Posterior vena cava (tissue), 2 donors: ENCODE measurements at regions of chr6 and their contacts with region 1.

Region 1: GRCh38 chr6:85642774-85643536 is at the start of gene SYNCRIP:
- DNase-seq: peak; percentile 100
- total RNA-seq, gene SYNCRIP: 113 to 147 TPM

Region 2: GRCh38 chr6:85678602-85679444 is 35.9 kb after region 1 on chr6:
- intact Hi-C with region 1: loop called in 1 of 2 experiments (anchors 2 kb)
- DNase-seq: peak; percentile 99